Right ventricle myocardium superior (tissue), 1 donor: ENCODE measurements at regions of chr10 and their contacts with region 1.

Region 1: DNA sequence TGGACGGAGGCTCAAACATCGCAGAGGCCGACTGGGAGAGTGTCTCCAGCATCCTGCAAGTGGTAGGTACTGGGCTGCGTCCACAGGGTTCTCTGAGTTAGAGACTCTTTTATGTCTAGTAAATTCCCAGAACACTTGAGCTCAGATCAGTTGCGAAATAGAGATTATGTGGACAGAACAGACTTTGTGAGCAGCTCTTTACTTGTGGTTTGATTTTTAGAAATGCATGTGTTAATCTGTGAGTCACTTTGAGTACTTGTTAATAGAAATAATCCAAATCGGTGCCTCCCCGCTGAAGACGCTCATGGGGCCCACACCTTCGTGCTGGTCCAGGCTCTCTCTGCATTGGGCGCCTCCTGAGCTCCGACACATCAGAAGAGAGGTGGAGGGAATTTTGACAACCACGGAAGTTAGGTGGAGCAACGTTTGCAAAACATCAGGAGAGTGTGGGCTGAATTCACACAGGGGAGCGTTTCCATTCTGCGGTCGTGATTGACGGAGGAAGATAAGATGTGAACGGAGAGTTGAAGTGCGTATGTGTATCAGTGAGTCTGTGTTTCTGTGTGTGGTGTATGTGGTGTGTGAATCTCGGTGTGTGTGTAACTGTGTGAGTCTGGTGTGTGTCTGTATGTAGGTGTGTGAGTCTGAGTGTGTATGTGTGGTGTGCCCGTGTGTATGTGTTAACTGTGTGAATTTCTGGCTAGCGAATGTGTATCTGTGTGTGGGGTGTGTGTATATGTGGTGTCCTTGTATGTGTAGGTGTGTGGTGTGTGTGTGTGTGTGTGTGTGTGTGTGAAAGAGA is 32.1 kb downstream of the PFKP start:
- DNase-seq: no peak
- ATAC-seq: no peak

Region 2: GRCh38 chr10:2839081-2839725 is 260.3 kb before region 1 on chr10:
- intact Hi-C with region 1: no loop called
- DNase-seq: peak; percentile 53
- ATAC-seq: no peak

Region 3: GRCh38 chr10:3025300-3025699 is 74.2 kb before region 1 on chr10:
- intact Hi-C with region 1: no loop called
- DNase-seq: no peak
- ATAC-seq: no peak

Region 4: GRCh38 chr10:3068201-3068967 is 31.1 kb before region 1 on chr10:
- intact Hi-C with region 1: loop called (anchors 5 kb)
- DNase-seq: peak; percentile 79
- ATAC-seq: peak; percentile 44

Region 5: DNA sequence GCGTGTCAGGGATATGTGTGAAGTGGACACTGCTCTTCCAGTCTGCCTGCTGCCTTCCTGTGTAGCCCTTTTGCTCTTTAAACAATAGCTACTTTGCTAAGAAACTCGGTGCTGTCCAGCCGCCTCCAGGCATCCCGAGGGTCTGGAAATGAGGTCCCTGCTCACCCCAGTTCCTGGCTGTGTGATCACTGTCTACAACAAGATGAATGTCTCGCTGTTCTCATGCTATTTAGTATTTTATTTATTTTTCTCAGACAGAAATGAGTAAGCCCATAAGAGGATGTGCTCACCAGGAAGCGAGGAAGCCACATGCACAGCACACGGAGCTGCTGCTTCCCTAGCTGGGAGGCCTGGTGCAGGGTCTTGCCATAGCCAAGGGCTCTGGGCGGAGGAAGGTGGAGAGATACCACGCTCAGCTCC is 240.0 kb after region 1 on chr10:
- intact Hi-C with region 1: no loop called
- DNase-seq: no peak
- ATAC-seq: no peak